PC-3 (cell line): ENCODE measurements at regions of chr6 and their contacts with region 1.

Region 1: DNA sequence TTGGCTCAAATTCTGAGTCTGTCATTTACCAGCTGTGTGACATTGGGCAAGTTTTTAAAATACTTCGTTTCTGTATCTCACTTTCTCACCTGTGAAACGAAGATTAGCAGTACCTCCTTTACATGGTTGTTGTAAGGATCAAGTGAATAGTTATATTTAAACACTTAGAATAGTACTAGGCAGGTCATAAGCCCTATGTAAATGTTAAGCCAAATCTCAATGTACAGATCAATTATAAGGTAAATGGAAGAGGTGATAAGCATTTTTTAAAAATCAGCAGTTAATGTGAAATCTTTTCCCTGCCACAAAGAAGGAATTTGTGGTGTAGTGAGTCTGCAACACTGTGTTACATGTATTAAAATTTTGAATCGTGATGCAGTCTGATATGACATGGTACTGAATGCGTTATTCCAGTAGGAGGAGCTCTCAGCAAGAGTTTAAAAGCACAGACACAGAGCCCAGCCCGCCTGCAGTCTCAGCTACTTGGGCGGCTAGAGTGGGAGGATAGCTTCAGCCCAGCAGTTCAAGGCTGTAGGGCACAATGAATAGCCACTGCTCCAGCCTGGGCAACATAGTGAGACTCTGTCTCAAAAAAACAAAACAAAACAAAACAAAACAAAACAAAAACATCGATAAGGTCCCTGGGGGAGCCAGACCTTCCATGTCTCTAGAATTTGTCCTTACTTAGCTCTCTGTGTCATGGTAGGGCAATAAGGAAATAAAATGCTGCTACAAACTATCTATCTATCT is 46.0 kb downstream of the GTF2H5 start:
- DNase-seq: peak; percentile 76
- ATAC-seq: peak; percentile 99
- H3K4me3 ChIP-seq: no peak overlapping the region
- H3K27ac ChIP-seq: no peak overlapping the region
- H3K4me1 ChIP-seq: peaks cover 14% of the 10 kb centered on the region
- H3K27me3 ChIP-seq: no peaks in the 10 kb centered on the region
- CTCF ChIP-seq: peak; percentile 84

Region 2: GRCh38 chr6:157597446-157598312 is 616.4 kb before region 1 on chr6:
- CTCF ChIA-PET with region 1: no interaction called
- POLR2A ChIA-PET with region 1: no interaction called
- intact Hi-C with region 1: no loop called
- DNase-seq: peak; percentile 69
- ATAC-seq: peak; percentile 85
- H3K4me3 ChIP-seq: no peak overlapping the region
- H3K27ac ChIP-seq: peak overlapping the region; percentile 20; the same call in 1 of the 2 replicates
- H3K4me1 ChIP-seq: peaks cover 14% of the 10 kb centered on the region
- H3K27me3 ChIP-seq: no peaks in the 10 kb centered on the region
- CTCF ChIP-seq: peak; percentile 67

Region 3: DNA sequence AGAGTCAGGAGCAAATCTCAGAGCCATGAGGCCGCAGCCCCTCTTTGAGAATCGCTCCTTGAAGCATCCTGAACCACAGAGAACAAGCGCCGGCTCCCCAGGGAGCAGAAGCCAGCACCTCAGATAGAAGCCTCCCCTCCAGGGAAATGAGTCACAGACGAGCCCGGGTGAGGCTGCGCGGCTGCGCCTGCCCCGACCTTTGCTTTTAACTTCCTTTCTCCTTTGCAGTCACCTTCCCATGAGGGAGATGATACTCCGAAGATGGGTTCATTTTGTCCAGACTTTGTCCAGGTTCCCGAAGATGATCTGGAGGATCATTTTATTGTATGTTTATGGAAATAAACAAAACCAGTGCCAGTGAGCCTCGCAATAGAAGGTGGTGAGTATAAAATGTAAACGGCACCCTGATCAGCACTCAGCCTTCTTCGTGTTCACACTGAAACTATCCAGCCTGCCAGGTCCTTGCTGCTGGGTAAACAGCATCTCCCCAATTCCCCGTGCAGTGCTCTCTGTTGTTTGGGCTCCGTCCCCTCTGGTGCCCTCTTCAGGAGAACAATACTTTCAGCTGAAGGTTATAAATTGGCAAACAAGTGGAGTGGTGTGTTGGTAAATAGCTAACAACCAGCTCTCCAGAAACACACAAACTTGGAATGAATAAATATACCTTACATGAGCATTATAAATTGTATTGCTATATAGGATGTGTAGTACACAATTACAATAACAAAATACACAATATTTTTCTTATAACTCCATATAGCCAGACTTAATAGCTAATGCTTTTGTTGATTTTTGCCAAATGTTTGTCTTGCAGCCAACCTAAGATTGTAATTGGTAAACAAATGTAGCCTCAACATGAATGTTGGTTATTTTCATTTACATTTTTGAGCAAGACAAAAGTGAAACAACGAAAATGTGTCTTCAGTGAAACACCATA is 304.4 kb after region 1 on chr6:
- CTCF ChIA-PET with region 1: interaction called, 10 read pairs
- POLR2A ChIA-PET with region 1: no interaction called
- intact Hi-C with region 1: no loop called
- DNase-seq: peak; percentile 71
- ATAC-seq: peak; percentile 95
- H3K4me3 ChIP-seq: peak overlapping the region; percentile 65
- H3K27ac ChIP-seq: peak overlapping the region; percentile 47
- H3K4me1 ChIP-seq: peaks cover 6% of the 10 kb centered on the region; the same call in 1 of the 2 replicates
- H3K27me3 ChIP-seq: no peaks in the 10 kb centered on the region
- CTCF ChIP-seq: peak; percentile 73

Region 4: GRCh38 chr6:158610319-158610968 is 396.3 kb after region 1 on chr6:
- CTCF ChIA-PET with region 1: interaction called, 4 read pairs
- POLR2A ChIA-PET with region 1: interaction called, 13 read pairs
- intact Hi-C with region 1: no loop called
- DNase-seq: no peak
- ATAC-seq: no peak
- H3K4me3 ChIP-seq: no peak overlapping the region
- H3K27ac ChIP-seq: no peak overlapping the region
- H3K4me1 ChIP-seq: no peaks in the 10 kb centered on the region
- H3K27me3 ChIP-seq: no peaks in the 10 kb centered on the region
- CTCF ChIP-seq: no peak